AG04450 (cell line): ENCODE measurements at regions of chr11 and their contacts with region 1.

Region 1: GRCh38 chr11:102188488-102188887 is 78.2 kb downstream of the YAP1 start:
- DNase-seq: no peak
- H3K4me3 ChIP-seq: no peak overlapping the region
- H3K27ac ChIP-seq: no peak overlapping the region
- H3K27me3 ChIP-seq: no peaks in the 10 kb centered on the region
- CTCF ChIP-seq: no peak

Region 2: DNA sequence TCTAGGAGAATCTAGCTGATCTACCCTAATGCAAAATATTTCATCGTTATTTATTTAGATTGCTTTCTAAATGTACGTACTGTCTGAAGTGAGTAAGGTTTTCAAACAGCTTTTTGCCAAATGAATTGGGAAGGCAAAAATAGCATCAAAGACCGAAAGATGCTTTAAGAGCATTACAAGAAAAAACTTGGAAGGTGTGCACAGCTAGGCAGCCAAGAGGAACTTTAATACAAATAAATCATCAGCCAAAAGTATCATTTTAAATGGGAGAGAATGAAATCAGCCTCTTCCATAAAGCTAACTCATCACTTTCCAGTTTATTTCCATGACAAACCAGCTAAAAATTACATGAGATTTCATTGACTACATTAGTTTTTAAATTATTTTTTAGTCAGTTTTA is 171.5 kb before region 1 on chr11:
- CTCF ChIA-PET with region 1: no interaction called
- POLR2A ChIA-PET with region 1: no interaction called
- DNase-seq: no peak
- H3K4me3 ChIP-seq: no peak overlapping the region
- H3K27ac ChIP-seq: no peak overlapping the region
- H3K27me3 ChIP-seq: no peaks in the 10 kb centered on the region
- CTCF ChIP-seq: no peak

Region 3: DNA sequence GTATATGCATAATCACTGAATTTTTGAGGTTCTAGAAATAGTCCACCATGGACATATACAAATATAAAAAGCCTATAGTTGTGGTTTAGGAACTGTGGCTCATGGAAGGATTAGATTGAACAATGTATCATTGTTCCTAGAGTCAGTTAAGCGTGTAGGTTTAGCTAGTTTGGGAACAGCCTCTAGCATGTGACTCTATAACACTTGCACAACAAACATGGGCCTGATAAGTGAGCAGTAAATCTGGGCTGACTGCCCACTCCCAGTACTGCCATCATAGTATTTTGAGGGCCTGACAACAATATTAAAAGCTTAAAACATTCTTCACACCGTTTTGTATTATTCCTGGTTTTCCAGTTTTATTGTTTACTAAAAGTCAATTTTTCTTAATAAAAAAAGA is 31.3 kb before region 1 on chr11:
- CTCF ChIA-PET with region 1: interaction called, 10 read pairs
- POLR2A ChIA-PET with region 1: no interaction called
- DNase-seq: no peak
- H3K4me3 ChIP-seq: no peak overlapping the region
- H3K27ac ChIP-seq: no peak overlapping the region
- H3K27me3 ChIP-seq: no peaks in the 10 kb centered on the region
- CTCF ChIP-seq: no peak